ENCODE measurements at regions of chr11 and their contacts with region 1.

Region 1: DNA sequence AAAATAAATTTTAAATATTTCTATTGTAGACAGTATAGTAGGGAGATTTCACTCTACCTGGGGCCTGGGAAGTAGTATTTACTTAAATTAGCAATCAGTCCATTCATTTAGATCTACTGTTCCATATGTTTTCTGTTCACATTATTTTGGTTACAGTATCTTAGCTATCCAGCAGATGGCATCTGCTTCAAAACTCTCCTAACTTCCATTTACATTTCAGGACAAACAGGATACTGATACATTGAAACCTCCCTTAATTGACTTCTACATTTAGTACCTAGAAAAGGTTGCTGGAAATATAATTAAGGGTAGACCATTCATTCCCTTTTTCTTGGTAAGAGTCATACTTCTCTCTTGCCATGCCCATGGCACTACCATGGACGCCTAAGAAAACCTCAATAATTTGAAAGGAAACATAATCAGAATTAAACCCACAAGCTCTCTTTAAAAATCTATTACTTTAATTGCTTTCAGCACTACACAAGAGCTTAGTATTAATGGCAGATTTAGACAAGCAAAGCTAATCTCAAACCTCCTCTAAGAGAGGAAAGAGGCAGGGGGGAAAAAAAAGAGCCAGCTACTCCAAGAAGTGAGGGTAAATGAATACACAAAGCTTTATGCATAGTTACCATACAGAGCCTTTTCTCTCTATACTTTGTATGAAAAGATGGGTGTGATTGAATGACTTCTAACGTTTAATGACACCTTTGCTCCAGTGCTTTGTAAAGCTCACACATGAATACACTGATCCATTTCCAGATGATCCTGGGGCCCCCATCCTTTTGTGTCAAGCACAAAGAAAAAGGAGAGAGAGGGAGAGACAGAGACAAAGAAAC is 131.2 kb upstream of the MTMR2 start:
- DNase-seq: no peak
- ATAC-seq: peak; percentile 34
- H3K4me3 Mint-ChIP-seq: no peak overlapping the region
- H3K27ac Mint-ChIP-seq: peak overlapping the region; percentile 73
- H3K4me1 Mint-ChIP-seq: peaks cover 75% of the 10 kb centered on the region
- H3K27me3 Mint-ChIP-seq: no peaks in the 10 kb centered on the region
- CTCF ChIP-seq: peak; percentile 78

Region 2: DNA sequence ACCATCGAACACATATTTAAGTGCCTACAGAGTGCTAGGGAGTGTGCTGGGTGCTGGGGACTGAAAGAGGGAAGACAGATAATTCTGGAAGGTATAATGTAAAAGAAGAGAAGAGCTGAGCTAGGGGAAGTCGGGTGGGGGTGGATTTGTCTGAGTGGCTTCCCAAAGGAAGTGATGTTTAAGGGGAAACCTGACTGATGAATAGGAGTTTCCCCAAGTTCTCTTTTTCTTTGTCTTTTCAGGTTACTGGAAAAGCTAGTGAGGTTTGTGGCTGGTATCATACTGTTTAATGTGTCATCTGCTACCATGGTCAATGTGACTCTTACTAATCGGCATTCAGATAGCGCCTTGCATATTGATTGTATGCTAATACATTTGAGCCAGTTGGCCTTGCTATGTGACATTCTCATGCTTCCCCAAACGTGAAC is 20.5 kb after region 1 on chr11:
- CTCF ChIA-PET with region 1: interaction called, 12 read pairs
- POLR2A ChIA-PET with region 1: no interaction called
- intact Hi-C with region 1: no loop called
- DNase-seq: peak; percentile 41
- ATAC-seq: peak; percentile 82
- H3K4me3 Mint-ChIP-seq: peak overlapping the region; percentile 20
- H3K27ac Mint-ChIP-seq: peak overlapping the region; percentile 90
- H3K4me1 Mint-ChIP-seq: peaks cover 78% of the 10 kb centered on the region
- H3K27me3 Mint-ChIP-seq: no peaks in the 10 kb centered on the region
- CTCF ChIP-seq: no peak